Activated CD4-positive, alpha-beta memory T cell treated with anti-CD3 and anti-CD28 coated beads for 36 hours (primary cell): ENCODE measurements at regions of chr20 and their contacts with region 1.

Region 1: DNA sequence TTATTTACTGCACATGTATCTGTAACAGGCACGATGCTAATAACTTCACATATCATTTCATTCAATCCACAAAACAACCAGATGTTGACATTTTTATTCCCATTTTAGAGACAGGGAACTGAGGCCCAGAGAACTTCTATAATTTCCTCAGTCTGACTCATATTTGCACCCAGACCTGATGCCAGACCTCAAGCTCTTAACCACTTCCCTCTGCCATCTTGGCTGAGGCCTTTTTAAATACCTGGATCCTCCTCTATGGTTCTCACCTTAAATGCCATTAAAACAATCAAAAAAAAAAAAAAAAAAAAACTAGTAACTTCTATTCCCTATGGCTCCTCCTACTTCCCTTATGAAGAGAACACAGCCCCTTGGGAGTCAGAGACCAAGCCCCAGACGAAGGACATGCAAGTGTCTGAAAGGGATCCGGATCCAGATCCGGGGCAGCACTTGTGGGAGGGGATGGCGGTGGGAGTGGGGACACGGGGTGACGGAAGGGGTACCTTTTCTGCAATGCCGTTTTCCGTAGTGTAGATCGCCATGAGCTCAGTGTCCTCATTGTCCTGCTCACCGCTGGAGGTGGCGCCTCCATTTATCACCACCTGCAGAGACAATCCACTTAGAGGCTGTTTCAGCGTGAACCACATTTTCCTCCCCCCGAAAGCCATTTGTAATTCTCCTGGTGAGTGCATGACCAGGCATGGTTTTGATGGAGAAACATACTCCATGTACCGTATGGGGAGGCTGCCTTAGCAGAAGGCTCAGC is 88.7 kb downstream of the SLC23A2 start:
- DNase-seq: no peak
- H3K4me3 Mint-ChIP-seq: no peak overlapping the region
- H3K27ac Mint-ChIP-seq: no peak overlapping the region
- H3K4me1 Mint-ChIP-seq: peaks cover 8% of the 10 kb centered on the region
- H3K27me3 Mint-ChIP-seq: no peaks in the 10 kb centered on the region

Region 2: DNA sequence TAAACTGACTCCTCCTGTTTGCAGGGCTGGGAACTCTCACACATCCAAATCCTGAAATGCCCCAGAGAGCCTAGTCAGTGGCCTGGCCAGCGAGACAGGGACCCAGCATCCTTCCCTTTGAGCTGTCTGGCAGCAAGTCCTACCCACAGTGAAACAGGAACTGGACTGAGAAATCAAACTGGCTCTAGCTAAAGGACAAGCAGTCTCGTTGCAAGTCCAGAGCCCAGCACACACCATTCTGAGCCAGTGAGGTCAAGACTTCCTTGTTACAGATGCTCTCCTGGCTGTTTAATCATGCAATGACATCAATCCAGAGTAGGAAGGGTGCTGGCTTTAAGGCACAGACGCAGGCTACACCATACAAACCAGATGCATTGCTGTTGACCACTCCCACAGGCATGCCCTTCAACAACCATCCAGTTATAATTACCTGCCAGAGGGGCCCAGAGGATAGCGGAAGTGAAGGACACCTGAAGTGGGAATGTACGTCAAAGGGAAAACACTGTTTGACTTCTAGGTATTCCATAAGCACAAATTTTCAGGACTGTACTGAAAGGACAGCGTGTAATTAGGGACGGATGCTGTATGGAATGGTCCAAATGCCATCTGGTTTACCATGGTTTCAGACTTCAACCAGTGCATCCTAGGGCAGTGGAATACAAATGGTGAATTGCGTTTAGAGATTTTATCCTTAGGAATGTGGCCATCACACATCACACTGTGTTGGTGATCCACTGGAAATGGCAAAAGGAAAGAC is 25.6 kb before region 1 on chr20:
- CTCF ChIA-PET with region 1: no interaction called
- POLR2A ChIA-PET with region 1: no interaction called
- intact Hi-C with region 1: no loop called
- DNase-seq: no peak
- H3K4me3 Mint-ChIP-seq: no peak overlapping the region
- H3K27ac Mint-ChIP-seq: no peak overlapping the region
- H3K4me1 Mint-ChIP-seq: no peaks in the 10 kb centered on the region
- H3K27me3 Mint-ChIP-seq: no peaks in the 10 kb centered on the region

Region 3: GRCh38 chr20:4937397-4938319 is 25.1 kb after region 1 on chr20:
- CTCF ChIA-PET with region 1: no interaction called
- POLR2A ChIA-PET with region 1: no interaction called
- intact Hi-C with region 1: loop called (anchors 2 kb)
- DNase-seq: no peak
- H3K4me3 Mint-ChIP-seq: no peak overlapping the region
- H3K27ac Mint-ChIP-seq: no peak overlapping the region
- H3K4me1 Mint-ChIP-seq: peaks cover 8% of the 10 kb centered on the region
- H3K27me3 Mint-ChIP-seq: no peaks in the 10 kb centered on the region